ENCODE measurements at regions of chr9 and their contacts with region 1.

Region 1: DNA sequence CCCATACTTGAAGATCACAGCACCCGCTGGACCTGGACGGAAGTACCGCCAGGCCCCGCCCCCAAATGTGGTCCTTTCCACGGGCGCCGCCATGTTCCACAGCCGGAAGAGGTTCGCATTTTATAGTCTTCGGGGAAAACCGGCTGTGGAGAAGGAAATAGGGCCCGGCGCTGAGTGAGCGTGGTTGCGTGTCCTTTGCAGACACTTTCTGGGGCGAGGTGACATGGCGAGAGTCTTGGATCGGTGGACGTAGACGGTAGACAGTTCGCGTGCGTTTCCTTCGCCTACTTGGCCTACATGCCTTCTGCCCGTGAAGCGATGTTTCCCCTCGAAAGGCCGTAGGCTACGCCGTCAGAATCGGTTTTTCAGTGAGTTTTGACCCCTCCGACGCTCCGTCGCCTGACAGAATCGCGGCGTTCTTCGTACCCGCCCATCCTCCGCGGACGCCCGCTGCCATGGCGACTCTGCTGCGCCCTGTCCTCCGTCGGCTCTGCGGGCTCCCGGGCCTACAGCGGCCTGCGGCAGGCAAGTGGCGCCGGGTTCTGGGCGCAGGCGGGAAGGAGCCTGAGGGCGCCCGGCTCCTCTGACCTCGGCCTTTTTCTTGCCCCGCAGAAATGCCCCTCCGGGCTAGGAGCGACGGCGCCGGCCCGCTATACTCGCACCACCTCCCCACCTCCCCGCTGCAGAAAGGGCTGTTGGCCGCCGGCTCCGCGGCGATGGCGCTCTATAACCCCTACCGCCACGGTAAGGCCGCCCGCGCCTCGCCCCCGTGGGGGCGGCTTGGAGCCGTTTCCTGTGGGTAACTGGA is at the starts of genes COQ4 and TRUB2:
- DNase-seq: peak; percentile 57 to 94
- H3K4me3 ChIP-seq: peak within 1 kb of the TSS; percentile 86 to 100 (median 92)
- H3K27ac ChIP-seq: peak within 1 kb of the TSS; percentile 90
- H3K4me1 ChIP-seq: no peaks in the 10 kb centered on the region; a peak in 3 of 7 replicates
- H3K27me3 ChIP-seq: no peaks in the 10 kb centered on the region
- CTCF ChIP-seq: no peak
- EP300 ChIP-seq: no peak
- POLR2A ChIP-seq: peak; percentile 85 to 94
- RAD21 ChIP-seq: no peak
- total RNA-seq, gene COQ4: 30.2 and 32.3 TPM in 2 replicates
- total RNA-seq, gene TRUB2: 37.8 and 39.7 TPM in 2 replicates

Region 2: DNA sequence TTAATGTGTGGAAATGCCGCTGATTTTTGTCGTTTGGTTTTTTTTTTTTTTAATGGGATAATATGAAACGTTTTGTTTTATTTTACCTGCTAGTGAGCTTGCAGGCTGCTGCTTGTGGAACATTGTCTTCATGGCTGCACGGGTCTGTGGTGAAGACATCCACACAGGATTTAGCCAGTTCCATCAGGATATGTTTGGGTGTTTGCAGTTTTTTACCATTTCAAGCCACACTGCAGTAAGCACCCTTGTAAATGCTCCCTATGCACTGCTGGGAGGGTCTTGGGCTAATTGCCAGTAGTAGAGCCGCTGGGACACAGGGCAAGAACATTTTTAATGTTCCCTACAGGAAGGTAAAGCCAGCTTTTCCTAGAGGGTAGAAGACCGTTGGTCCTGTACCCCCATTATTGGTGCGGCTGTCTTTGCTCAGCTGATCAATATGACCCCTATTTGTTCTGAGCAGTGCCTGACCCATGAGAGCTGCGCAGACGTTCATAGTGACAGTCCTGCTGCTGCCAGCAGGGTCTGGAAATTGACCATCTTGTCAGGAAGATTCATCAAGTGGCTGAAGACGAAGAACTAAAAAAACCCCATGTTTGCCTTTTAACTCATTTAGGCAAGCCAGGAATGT is 321.3 kb before region 1 on chr9:
- CTCF ChIA-PET with region 1: no interaction called
- POLR2A ChIA-PET with region 1: no interaction called
- DNase-seq: no peak
- H3K4me3 ChIP-seq: no peak overlapping the region
- H3K27ac ChIP-seq: no peak overlapping the region
- H3K4me1 ChIP-seq: peaks cover 0 to 7% (median 4%) of the 10 kb centered on the region in 4 experiments; a peak in 3 of 7 replicates
- H3K27me3 ChIP-seq: no peaks in the 10 kb centered on the region
- CTCF ChIP-seq: no peak
- EP300 ChIP-seq: no peak
- POLR2A ChIP-seq: no peak
- RAD21 ChIP-seq: no peak

Region 3: DNA sequence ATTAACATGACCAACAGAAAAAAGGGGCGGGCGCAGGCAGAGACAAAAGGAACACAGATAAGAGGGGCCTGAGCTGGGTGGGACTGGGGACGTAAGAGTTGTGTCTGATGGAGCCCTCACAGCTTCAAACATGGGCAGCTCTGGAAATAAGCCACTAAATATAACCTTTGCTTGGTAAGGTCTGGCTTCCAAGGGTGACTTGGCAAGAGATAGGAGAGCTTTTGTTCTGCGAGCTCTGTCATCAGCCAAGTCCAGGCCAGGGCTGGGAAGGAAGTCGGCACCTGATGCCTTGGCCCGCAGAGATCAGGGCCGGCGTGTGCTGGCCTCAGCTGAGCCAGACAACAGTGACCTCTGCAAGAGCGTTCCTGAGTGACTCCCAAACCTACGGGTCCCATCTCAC is 12.1 kb before region 1 on chr9:
- CTCF ChIA-PET with region 1: interaction called, 3 read pairs
- POLR2A ChIA-PET with region 1: interaction called, 11 read pairs
- DNase-seq: no peak
- H3K4me3 ChIP-seq: no peak overlapping the region
- H3K27ac ChIP-seq: no peak overlapping the region
- H3K4me1 ChIP-seq: no peaks in the 10 kb centered on the region
- H3K27me3 ChIP-seq: no peaks in the 10 kb centered on the region
- CTCF ChIP-seq: no peak
- EP300 ChIP-seq: no peak
- POLR2A ChIP-seq: no peak
- RAD21 ChIP-seq: no peak

Region 4: GRCh38 chr9:128333451-128333869 is 10.9 kb after region 1 on chr9:
- CTCF ChIA-PET with region 1: interaction called, 5 read pairs
- POLR2A ChIA-PET with region 1: interaction called, 10 read pairs
- DNase-seq: no peak
- H3K4me3 ChIP-seq: no peak overlapping the region
- H3K27ac ChIP-seq: no peak overlapping the region
- H3K4me1 ChIP-seq: no peaks in the 10 kb centered on the region
- H3K27me3 ChIP-seq: no peaks in the 10 kb centered on the region; a peak in 1 of 7 replicates
- CTCF ChIP-seq: no peak
- EP300 ChIP-seq: no peak
- POLR2A ChIP-seq: no peak
- RAD21 ChIP-seq: no peak

Region 5: DNA sequence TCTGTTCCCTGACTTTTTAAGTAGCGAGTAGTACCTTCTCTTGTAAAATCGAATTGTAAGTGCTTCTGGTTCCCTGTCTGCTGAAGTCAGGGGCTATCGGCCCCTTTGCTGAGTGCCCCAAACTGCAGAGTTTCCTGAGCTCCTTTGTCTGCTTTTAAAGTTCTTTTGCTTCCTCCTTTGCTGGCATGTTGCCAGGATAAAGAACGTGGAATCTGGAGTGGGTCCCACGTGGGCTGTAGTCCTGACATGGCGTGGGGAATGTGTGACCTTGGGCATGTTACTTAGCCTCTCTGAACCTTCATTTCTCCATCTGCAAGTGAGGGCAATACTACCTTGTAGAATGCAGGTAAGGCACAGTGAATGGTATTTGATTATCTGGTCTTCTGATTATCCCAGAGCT is 119.5 kb after region 1 on chr9:
- CTCF ChIA-PET with region 1: no interaction called
- POLR2A ChIA-PET with region 1: no interaction called
- DNase-seq: no peak
- H3K4me3 ChIP-seq: no peak overlapping the region
- H3K27ac ChIP-seq: no peak overlapping the region
- H3K4me1 ChIP-seq: peaks cover 0 to 3% (median 0%) of the 10 kb centered on the region in 4 experiments; a peak in 1 of 7 replicates
- H3K27me3 ChIP-seq: peaks cover 0 to 4% (median 0%) of the 10 kb centered on the region in 4 experiments; a peak in 1 of 7 replicates
- CTCF ChIP-seq: no peak
- EP300 ChIP-seq: no peak
- POLR2A ChIP-seq: no peak
- RAD21 ChIP-seq: no peak

Region 6: DNA sequence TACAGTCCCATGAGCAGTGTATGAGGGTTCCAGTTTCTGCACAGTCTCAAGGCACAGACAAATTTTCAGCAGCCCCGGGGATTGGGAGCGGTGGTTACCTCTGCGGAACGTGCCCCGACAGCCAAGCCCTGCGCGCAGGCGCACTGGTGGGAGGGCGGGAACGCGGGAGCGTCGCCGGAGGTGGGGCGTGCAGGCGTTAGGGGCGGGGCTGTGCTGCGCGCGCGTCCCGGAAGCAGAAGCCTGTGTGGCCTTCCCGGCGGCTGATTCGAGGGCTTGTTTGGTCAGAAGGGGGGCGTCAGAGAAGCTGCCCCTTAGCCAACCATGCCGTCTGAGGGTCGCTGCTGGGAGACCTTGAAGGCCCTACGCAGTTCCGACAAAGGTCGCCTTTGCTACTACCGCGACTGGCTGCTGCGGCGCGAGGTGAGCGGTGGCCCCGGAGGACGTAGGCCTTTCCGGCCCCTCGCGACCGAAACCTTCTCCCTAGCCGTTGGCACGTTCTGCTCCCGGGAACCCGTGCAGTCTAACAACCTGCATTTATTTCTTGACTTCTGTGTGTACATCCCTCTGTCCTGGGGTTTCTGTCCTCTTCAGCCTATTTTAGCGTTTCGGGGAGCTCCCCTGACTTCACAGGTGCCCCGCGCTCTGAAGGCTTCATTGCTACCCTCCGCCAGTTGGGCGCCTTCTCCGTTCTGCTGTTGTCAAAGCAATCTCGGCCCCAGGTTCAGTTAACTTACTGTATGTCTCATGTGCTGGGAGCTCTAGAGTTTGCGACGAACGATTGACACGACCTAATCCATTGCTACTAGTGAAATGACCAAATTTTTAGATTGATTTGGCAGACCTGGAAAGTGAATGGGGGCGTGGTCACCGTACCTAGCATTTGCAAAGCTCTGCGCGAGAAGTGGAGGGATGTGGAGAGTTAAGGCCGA is 182.1 kb after region 1 on chr9 and contains the start of gene GLE1:
- CTCF ChIA-PET with region 1: no interaction called
- POLR2A ChIA-PET with region 1: no interaction called
- DNase-seq: peak; percentile 77 to 99
- H3K4me3 ChIP-seq: peak within 1 kb of the TSS; percentile 77 to 99 (median 94)
- H3K27ac ChIP-seq: no peak within 1 kb of the TSS
- H3K4me1 ChIP-seq: peaks cover 0 to 3% (median 0%) of the 10 kb centered on the region in 4 experiments; a peak in 3 of 7 replicates
- H3K27me3 ChIP-seq: no peaks in the 10 kb centered on the region
- CTCF ChIP-seq: no peak
- EP300 ChIP-seq: no peak
- POLR2A ChIP-seq: peak in 1 of 2 experiments; percentile 61; a peak in 2 of 3 replicates
- RAD21 ChIP-seq: no peak
- total RNA-seq, gene GLE1: 14.9 and 15.1 TPM in 2 replicates

Region 7: DNA sequence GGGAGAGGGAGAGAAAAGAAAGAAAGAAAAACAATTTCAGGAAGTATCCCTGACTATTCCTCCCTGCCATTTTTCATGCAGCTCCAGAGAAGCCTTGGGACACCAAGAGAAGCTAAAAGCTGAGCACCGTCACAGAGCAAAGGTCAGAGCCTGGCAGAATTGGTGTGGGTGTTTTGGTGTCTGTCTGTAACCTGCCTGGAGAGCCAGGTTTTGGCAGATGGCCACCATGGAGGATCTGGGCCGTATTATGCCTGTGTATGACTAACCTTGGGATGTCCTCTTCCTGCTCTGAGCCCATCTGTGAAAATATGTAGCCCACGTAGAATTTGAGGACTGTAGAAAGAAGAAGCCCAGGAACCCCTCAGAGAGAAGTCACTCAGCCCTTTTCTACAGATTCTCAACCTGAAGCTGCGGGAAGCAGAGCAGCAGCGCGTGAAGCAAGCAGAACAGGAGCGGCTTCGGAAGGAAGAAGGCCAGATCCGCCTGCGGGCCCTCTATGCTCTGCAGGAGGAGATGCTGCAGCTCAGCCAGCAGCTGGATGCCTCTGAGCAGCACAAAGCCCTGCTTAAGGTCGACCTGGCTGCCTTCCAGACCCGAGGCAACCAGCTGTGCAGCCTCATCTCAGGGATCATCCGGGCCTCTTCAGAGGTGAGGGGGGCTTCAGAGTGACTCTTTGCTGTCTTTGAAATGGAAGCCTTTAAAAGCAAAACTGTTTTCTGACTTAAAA is 200.8 kb after region 1 on chr9:
- CTCF ChIA-PET with region 1: no interaction called
- POLR2A ChIA-PET with region 1: no interaction called
- DNase-seq: no peak
- H3K4me3 ChIP-seq: no peak overlapping the region
- H3K27ac ChIP-seq: no peak overlapping the region
- H3K4me1 ChIP-seq: no peaks in the 10 kb centered on the region; a peak in 1 of 7 replicates
- H3K27me3 ChIP-seq: no peaks in the 10 kb centered on the region
- CTCF ChIP-seq: no peak
- EP300 ChIP-seq: no peak
- POLR2A ChIP-seq: no peak
- RAD21 ChIP-seq: no peak

Measured in H1 (cell line).